ENCODE measurements at regions of chr6 and their contacts with region 1.

Region 1: GRCh38 chr6:108558372-108559096 is 2.2 kb upstream of the FOXO3 start:
- DNase-seq: peak; percentile 98 to 100 (median 99)
- ATAC-seq: peak; percentile 72 to 79 (median 73)
- H3K4me3 ChIP-seq: peak overlapping the region; percentile 81 to 99 (median 96)
- H3K27ac ChIP-seq: peak overlapping the region; percentile 94 to 100 (median 99)
- H3K4me1 ChIP-seq: peaks cover 0 to 40% (median 24%) of the 10 kb centered on the region in 12 donors
- H3K27me3 ChIP-seq: no peaks in the 10 kb centered on the region
- CTCF ChIP-seq: no peak
- POLR2A ChIP-seq: peak in 1 of 2 donors; percentile 65

Region 2: GRCh38 chr6:108589287-108589791 is 30.8 kb after region 1 on chr6:
- intact Hi-C with region 1: loop called in 2 of 10 experiments (anchors 2 kb)
- DNase-seq: peak; percentile 54 to 79 (median 71)
- ATAC-seq: peak; percentile 85 to 91 (median 88)
- H3K4me3 ChIP-seq: peak overlapping the region in 5 of 12 donors; percentile 0 to 21 (median 7)
- H3K27ac ChIP-seq: peak overlapping the region; percentile 46 to 89 (median 80)
- H3K4me1 ChIP-seq: peaks cover 45 to 98% (median 96%) of the 10 kb centered on the region in 12 donors
- H3K27me3 ChIP-seq: no peaks in the 10 kb centered on the region
- CTCF ChIP-seq: no peak
- POLR2A ChIP-seq: peak in 1 of 2 donors; percentile 41

Region 3: DNA sequence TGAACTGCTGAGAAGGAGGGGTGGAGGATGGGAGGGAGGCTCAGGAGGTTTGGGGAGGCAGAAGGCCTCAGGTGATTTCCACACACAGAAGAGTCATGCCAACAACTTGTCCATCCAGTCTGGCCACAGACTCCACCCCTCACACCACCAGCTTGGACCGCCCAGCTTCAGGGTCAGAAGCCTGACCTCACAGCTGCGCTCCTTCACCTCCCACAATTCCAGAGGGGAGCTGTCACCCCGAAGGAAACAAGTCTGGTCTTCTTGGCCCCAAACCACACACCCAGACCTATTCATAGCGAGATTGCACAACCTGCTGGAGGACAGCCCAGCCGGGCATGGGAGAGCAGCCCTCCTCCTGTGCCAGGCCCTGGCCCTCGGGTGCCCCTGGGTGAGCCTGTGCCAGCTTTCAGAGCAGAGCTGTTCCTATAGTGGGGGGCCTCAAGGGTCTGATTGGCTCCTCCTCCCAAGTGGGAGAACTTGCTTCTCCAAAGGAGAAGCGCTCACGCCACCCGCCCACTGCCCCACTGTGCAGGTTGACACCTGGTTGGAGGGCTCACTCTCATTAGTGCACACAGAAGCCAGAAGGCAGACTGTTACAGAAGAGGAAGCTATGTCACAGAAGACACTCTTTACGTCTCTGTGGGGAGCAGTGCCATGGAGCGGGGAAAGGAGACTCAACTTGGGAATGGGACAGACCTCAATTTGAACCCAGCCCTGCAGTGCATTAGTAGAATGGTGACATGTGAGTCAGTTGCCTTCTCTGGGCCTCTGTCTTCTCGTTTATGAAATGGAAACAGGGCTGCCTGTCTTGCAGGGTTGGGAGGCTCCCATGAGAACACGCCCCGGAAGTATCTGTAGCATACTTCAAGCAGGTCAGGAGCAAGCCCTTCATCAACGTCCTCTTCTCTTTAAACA is 131.0 kb after region 1 on chr6:
- intact Hi-C with region 1: loop called in 1 of 10 experiments (anchors 5 kb)
- DNase-seq: peak; percentile 85 to 94 (median 90)
- ATAC-seq: peak; percentile 91 to 97 (median 96)
- H3K4me3 ChIP-seq: no peak overlapping the region
- H3K27ac ChIP-seq: peak overlapping the region in 11 of 12 donors; percentile 22 to 78 (median 65)
- H3K4me1 ChIP-seq: peaks cover 0 to 53% (median 29%) of the 10 kb centered on the region in 12 donors
- H3K27me3 ChIP-seq: no peaks in the 10 kb centered on the region
- CTCF ChIP-seq: no peak
- POLR2A ChIP-seq: no peak

Region 4: DNA sequence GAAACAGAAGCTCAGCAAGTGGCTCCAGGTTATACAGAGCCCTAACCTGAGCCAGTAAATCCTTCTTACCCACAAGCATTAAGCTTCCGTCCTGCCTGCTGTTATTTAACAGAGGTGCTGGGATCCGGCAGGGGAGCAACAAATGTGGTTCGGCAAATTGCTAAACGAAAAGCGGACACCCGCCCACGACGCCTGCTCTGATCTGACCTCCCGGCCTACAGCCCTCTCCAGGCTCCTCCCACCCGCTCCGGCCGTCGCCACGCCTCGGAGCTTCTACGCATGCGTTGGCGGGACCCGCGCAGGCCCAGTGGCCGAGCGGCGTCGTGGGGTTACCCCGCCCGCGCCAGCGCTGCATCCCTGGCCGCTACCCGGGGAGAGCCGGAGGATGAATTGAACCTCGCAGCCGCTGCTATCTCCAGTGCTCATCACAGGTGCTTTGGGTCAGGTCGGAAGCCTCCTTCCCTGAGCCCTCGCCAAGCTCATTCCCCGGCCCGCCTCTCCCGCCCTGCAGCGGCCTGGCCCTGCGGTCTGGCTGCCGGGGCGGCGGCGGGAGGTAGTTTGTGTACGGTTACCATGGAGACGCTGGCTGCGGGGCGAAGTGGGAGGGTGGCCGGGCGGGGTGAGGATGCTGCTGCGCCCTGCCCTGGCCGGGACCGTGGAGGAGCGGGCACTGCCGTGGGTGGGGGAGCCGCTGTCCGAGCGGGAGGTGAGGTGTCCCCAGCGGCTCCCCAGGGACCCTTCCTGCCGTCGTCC is 289.8 kb after region 1 on chr6 and contains the start of gene ARMC2:
- intact Hi-C with region 1: loop called in 2 of 10 experiments (anchors 2 to 5 kb)
- DNase-seq: peak; percentile 94 to 99 (median 96)
- ATAC-seq: peak; percentile 95 to 98 (median 96)
- H3K4me3 ChIP-seq: peak within 1 kb of the TSS; percentile 59 to 92 (median 76)
- H3K27ac ChIP-seq: peak within 1 kb of the TSS; percentile 66 to 94 (median 88)
- H3K4me1 ChIP-seq: peaks cover 0 to 58% (median 29%) of the 10 kb centered on the region in 12 donors
- H3K27me3 ChIP-seq: no peaks in the 10 kb centered on the region
- CTCF ChIP-seq: peak in 2 of 12 donors; percentile 10 to 14
- POLR2A ChIP-seq: peak; percentile 66
- total RNA-seq, gene ARMC2: 5.7 to 18.0 (median 10.2) TPM

Region 5: GRCh38 chr6:109009236-109009961 is 450.9 kb after region 1 on chr6:
- intact Hi-C with region 1: loop called in 2 of 10 experiments (anchors 5 to 10 kb)
- DNase-seq: peak; percentile 95 to 98 (median 96)
- ATAC-seq: peak; percentile 86 to 99 (median 96)
- H3K4me3 ChIP-seq: peak overlapping the region; percentile 61 to 93 (median 85)
- H3K27ac ChIP-seq: peak overlapping the region; percentile 85 to 98 (median 93)
- H3K4me1 ChIP-seq: peaks cover 0 to 84% (median 37%) of the 10 kb centered on the region in 12 donors
- H3K27me3 ChIP-seq: no peaks in the 10 kb centered on the region
- CTCF ChIP-seq: peak in 9 of 12 donors; percentile 8 to 50 (median 29)
- POLR2A ChIP-seq: peak; percentile 73 to 96

Region 6: DNA sequence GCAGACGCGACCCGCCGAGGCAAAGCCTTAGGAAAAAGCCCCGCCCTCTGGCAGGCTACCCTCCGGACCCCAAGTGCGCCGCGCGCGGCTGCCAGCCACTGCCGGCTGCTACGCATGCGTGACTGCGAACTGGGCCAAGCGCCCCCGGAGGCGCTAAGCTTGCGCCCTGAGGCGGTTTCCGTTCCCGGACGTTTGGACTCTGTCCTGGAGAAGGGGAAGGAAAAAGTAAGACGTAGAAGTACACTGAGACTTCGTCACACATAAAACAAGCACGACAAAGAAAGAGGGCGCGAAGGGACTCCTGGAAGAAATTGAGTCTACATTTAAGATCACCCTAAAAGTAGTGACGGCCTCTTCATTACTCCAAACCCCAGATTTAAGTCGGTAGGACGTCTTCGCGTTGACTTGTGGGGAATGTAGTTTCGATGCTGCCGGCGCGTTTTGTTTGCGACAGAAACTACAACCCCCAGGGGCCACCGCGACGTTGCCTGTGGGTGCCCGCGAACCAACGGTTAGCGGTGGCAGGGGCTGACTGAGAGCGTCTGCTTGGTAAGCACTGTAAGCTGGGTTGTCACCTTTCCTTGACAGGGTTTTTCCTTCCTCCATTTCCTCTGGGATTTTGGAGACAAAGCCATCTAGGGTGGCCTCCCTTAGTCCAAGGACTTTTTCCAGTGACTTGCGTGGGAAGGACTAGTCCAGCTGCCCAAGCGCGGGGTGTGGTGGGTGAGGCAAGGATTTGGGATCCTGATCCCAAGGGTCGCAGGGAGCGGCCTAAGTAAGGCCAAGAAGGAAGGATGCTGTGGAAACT is 536.7 kb after region 1 on chr6 and contains the start of gene CEP57L1:
- intact Hi-C with region 1: loop called in 1 of 10 experiments (anchors 1 kb)
- DNase-seq: peak; percentile 98 to 99 (median 99)
- ATAC-seq: peak; percentile 77 to 90 (median 84)
- H3K4me3 ChIP-seq: peak within 1 kb of the TSS; percentile 51 to 88 (median 66)
- H3K27ac ChIP-seq: peak within 1 kb of the TSS; percentile 95 to 100 (median 98)
- H3K4me1 ChIP-seq: peaks cover 0 to 45% (median 22%) of the 10 kb centered on the region in 12 donors
- H3K27me3 ChIP-seq: no peaks in the 10 kb centered on the region
- CTCF ChIP-seq: peak in 2 of 12 donors; percentile 8 to 33
- POLR2A ChIP-seq: peak; percentile 7 to 26
- total RNA-seq, gene CEP57L1: 5.9 to 13.8 (median 10.3) TPM

Measured in heart left ventricle (tissue), 16 donors.